Heart right ventricle (tissue), 16 donors: ENCODE measurements at regions of chr5 and their contacts with region 1.

Region 1: GRCh38 chr5:73081093-73081492 is 39.3 kb upstream of the TMEM171 start:
- DNase-seq: no peak
- ATAC-seq: no peak
- H3K4me3 ChIP-seq: no peak overlapping the region
- H3K27ac ChIP-seq: no peak overlapping the region
- H3K4me1 ChIP-seq: no peaks in the 10 kb centered on the region
- H3K27me3 ChIP-seq: no peaks in the 10 kb centered on the region
- CTCF ChIP-seq: no peak

Region 2: GRCh38 chr5:73031839-73032238 is 49.3 kb before region 1 on chr5:
- intact Hi-C with region 1: no loop called
- DNase-seq: peak; percentile 8 to 21
- ATAC-seq: no peak
- H3K4me3 ChIP-seq: no peak overlapping the region
- H3K27ac ChIP-seq: no peak overlapping the region
- H3K4me1 ChIP-seq: peaks cover 0 to 6% (median 0%) of the 10 kb centered on the region in 9 donors
- H3K27me3 ChIP-seq: no peaks in the 10 kb centered on the region
- CTCF ChIP-seq: no peak

Region 3: DNA sequence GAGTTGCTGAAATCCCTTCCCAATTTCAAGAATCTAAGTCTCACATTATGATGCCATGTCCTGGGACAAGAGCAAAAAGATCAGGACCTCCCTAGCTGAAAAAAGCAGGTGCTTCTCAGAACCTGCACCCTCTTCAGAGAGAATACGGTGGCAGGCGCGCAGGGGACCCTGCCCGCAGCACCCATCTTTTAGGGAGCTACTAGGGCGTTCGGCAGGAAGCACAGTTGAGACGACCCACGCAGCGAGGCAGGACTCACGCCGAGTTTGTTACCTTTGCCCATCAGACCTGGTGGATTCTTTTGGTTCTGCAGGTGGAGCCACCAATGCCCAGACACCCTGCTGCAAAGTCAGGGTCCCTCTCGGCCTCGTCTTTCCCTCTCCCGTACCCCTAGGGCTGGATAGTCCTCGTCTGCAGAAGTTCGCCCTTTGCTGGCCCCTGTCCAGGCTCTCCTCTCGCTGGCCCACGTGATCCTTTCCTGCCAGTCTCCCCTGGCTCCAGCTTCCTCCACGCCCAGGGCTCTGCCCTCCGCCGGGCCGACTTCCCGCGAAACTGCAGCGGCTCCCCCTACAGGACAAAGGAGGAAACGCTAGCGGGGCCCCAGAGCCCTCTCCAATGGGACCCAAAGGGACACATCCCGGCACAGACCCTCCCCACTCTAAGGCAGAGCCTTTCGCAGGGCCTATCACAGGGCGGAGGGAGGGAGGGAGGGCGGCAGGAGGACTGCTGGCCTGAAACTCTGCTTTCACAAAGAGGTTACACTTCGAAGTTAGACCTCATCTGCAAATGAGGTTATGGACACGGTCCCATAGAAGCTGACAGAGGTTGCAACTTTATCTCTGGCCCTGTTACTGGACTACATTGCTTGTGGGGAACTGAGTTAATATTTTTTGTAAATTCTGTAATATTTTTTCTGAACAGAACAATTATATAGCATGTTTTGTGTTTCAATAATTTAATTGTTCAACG is 120.7 kb after region 1 on chr5:
- intact Hi-C with region 1: loop called in 3 of 10 experiments (anchors 5 kb)
- DNase-seq: peak; percentile 39 to 65
- ATAC-seq: peak; percentile 61 to 88 (median 76)
- H3K4me3 ChIP-seq: peak overlapping the region in 1 of 10 donors; percentile 8
- H3K27ac ChIP-seq: no peak overlapping the region
- H3K4me1 ChIP-seq: peaks cover 0 to 9% (median 4%) of the 10 kb centered on the region in 9 donors
- H3K27me3 ChIP-seq: peaks cover 0 to 68% (median 46%) of the 10 kb centered on the region in 7 donors
- CTCF ChIP-seq: peak; percentile 32 to 77 (median 70)

Region 4: GRCh38 chr5:73454351-73455036 is 373.4 kb after region 1 on chr5:
- intact Hi-C with region 1: loop called in 4 of 10 experiments (anchors 5 to 10 kb)
- DNase-seq: no peak
- ATAC-seq: peak in 1 of 8 donors; percentile 59
- H3K4me3 ChIP-seq: no peak overlapping the region
- H3K27ac ChIP-seq: no peak overlapping the region
- H3K4me1 ChIP-seq: peaks cover 3 to 16% (median 8%) of the 10 kb centered on the region in 9 donors
- H3K27me3 ChIP-seq: peaks cover 25 to 97% (median 95%) of the 10 kb centered on the region in 7 donors
- CTCF ChIP-seq: peak; percentile 36 to 76 (median 66)